ENCODE measurements at regions of chr10 and their contacts with region 1.

Region 1: GRCh38 chr10:14588084-14588937 is 186.4 kb downstream of the FAM107B start:
- DNase-seq: peak in 6 of 9 donors; percentile 24 to 60 (median 44)
- ATAC-seq: peak; percentile 20
- H3K4me3 ChIP-seq: peak overlapping the region; percentile 31
- H3K4me3 Mint-ChIP-seq: peak overlapping the region; percentile 76 to 88 (median 84)
- H3K27ac ChIP-seq: peak overlapping the region; percentile 83
- H3K27ac Mint-ChIP-seq: peak overlapping the region; percentile 96 to 100 (median 99)
- H3K4me1 ChIP-seq: peaks cover 73 to 76% of the 10 kb centered on the region in 2 donors
- H3K4me1 Mint-ChIP-seq: peaks cover 52 to 94% (median 93%) of the 10 kb centered on the region in 7 donors
- H3K27me3 ChIP-seq: no peaks in the 10 kb centered on the region
- H3K27me3 Mint-ChIP-seq: no peaks in the 10 kb centered on the region

Region 2: DNA sequence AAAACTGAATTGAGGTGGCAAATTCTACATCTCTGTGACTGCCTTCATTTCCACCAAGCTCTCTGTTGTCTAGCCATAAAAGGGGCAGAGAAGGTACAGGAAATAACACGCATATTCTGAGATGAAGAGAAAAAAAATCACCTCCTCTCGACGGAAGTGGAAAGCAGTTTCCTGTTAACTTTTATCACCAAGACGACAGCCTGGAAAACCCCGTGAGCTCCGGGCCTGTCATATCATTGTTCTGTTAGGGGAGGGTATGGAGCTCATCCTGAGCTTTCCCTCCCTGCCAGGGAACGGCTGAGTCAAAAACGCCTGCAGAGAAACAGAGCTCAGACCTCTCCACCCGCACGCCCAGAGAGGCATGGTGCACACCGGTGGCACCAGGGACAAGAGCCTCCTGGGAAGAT is 801.3 kb before region 1 on chr10:
- CTCF ChIA-PET with region 1: no interaction called
- POLR2A ChIA-PET with region 1: no interaction called
- intact Hi-C with region 1: no loop called
- DNase-seq: peak; percentile 37 to 94 (median 91)
- ATAC-seq: peak; percentile 94
- H3K4me3 ChIP-seq: peak overlapping the region; percentile 17
- H3K4me3 Mint-ChIP-seq: peak overlapping the region in 9 of 10 donors; percentile 76 to 88 (median 84)
- H3K27ac ChIP-seq: peak overlapping the region; percentile 93
- H3K27ac Mint-ChIP-seq: no peak overlapping the region
- H3K4me1 ChIP-seq: peaks cover 29 to 50% of the 10 kb centered on the region in 2 donors
- H3K4me1 Mint-ChIP-seq: peaks cover 11 to 37% (median 20%) of the 10 kb centered on the region in 7 donors
- H3K27me3 ChIP-seq: no peaks in the 10 kb centered on the region
- H3K27me3 Mint-ChIP-seq: no peaks in the 10 kb centered on the region

Region 3: GRCh38 chr10:14349081-14349480 is 239.2 kb before region 1 on chr10:
- CTCF ChIA-PET with region 1: no interaction called
- POLR2A ChIA-PET with region 1: no interaction called
- intact Hi-C with region 1: no loop called
- DNase-seq: no peak
- ATAC-seq: no peak
- H3K4me3 ChIP-seq: no peak overlapping the region
- H3K4me3 Mint-ChIP-seq: no peak overlapping the region
- H3K27ac ChIP-seq: no peak overlapping the region
- H3K27ac Mint-ChIP-seq: no peak overlapping the region
- H3K4me1 ChIP-seq: no peaks in the 10 kb centered on the region
- H3K4me1 Mint-ChIP-seq: no peaks in the 10 kb centered on the region
- H3K27me3 ChIP-seq: no peaks in the 10 kb centered on the region
- H3K27me3 Mint-ChIP-seq: peaks cover 0 to 13% (median 7%) of the 10 kb centered on the region in 5 donors

Region 4: GRCh38 chr10:14598809-14599764 is 10.8 kb after region 1 on chr10:
- CTCF ChIA-PET with region 1: interaction called, 6 read pairs
- POLR2A ChIA-PET with region 1: interaction called, 13 read pairs
- intact Hi-C with region 1: loop called (anchors 1 kb)
- DNase-seq: no peak
- ATAC-seq: peak; percentile 13
- H3K4me3 ChIP-seq: no peak overlapping the region
- H3K4me3 Mint-ChIP-seq: peak overlapping the region in 5 of 10 donors; percentile 25 to 94 (median 34)
- H3K27ac ChIP-seq: peak overlapping the region; percentile 31
- H3K27ac Mint-ChIP-seq: peak overlapping the region; percentile 33 to 91 (median 73)
- H3K4me1 ChIP-seq: peaks cover 18 to 42% of the 10 kb centered on the region in 2 donors
- H3K4me1 Mint-ChIP-seq: peaks cover 64 to 92% (median 88%) of the 10 kb centered on the region in 7 donors
- H3K27me3 ChIP-seq: no peaks in the 10 kb centered on the region
- H3K27me3 Mint-ChIP-seq: peaks cover 0 to 2% (median 0%) of the 10 kb centered on the region in 5 donors